ENCODE measurements at regions of chr1 and their contacts with region 1.

Region 1: GRCh38 chr1:184805667-184806295 is 51.1 kb upstream of the EDEM3 start:
- DNase-seq: peak; percentile 36
- H3K4me3 ChIP-seq: no peak overlapping the region
- CTCF ChIP-seq: peak; percentile 93

Region 2: GRCh38 chr1:184672013-184672726 is 133.6 kb before region 1 on chr1:
- CTCF ChIA-PET with region 1: no interaction called
- POLR2A ChIA-PET with region 1: no interaction called
- DNase-seq: no peak
- H3K4me3 ChIP-seq: no peak overlapping the region
- CTCF ChIP-seq: no peak

Region 3: DNA sequence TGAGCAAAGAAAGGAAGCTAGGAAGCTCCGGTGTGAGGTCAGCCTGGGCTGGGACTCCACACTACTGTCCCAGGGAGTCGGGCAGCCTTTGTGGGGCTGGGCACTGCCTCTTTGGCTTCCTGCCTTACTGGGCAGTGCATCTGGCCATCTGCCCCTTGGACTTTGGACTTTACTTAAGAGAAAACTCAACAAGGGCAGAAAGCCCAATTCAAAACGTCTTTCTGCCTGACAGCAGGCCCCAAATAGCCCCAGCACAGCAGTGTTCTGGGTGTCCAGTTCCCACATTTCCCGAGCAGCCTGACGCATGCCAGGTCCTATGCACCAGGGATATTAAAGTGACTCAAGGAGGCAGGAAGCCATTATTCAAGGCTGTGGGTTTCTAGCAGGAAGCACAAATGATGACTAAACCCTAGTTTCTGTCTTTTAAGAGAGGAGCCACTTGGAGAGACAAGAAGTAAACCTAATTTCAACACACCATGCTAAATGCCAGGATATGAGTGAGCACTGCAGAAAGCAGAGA is 13.3 kb before region 1 on chr1:
- CTCF ChIA-PET with region 1: interaction called, 36 read pairs
- POLR2A ChIA-PET with region 1: no interaction called
- DNase-seq: peak; percentile 96
- H3K4me3 ChIP-seq: no peak overlapping the region
- CTCF ChIP-seq: no peak

Region 4: DNA sequence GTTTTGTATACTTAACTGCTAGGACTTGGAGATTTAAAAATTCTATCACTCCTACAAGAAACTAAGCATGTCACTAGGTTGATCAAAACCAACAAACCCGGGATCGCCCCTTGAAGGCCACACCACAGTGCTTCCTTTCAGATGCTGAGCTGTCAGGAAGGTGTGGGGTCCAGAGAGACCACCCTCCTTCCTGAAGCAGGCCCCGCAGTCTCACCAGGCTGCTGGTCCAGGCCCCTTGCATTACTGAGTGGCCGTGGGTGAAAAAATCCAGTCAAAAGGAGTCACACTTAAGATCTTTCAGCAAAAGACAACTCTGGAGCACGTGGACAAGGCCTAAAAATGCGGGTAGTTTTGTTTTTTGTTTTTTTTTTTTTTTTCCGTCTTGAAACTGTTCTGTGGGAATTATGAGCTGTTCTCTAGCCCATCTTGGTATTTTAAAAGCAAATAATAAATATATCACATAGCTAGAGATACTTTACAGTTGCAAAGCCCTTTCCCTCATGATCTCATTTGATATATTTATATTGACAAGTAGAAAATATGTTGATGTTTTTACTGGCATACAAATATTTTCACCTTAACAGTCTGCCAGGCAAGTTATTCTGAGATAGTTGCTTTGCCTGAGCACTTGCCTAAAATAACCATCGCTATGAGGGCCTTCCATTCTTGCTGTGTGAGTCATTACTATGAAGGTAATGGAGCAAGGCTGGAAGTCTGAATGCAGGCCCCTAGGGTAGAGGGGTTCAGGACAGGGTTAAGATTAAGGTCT is 22.0 kb after region 1 on chr1:
- CTCF ChIA-PET with region 1: interaction called, 42 read pairs
- POLR2A ChIA-PET with region 1: no interaction called
- DNase-seq: no peak
- H3K4me3 ChIP-seq: no peak overlapping the region
- CTCF ChIP-seq: no peak

Region 5: GRCh38 chr1:184973272-184974055 is 167.7 kb after region 1 on chr1:
- CTCF ChIA-PET with region 1: interaction called, 650 read pairs
- POLR2A ChIA-PET with region 1: interaction called, 5 read pairs
- DNase-seq: no peak
- H3K4me3 ChIP-seq: peak overlapping the region; percentile 75
- CTCF ChIP-seq: no peak

Measured in AG04449 (cell line).